ENCODE measurements at regions of chr6 and their contacts with region 1.

Region 1: GRCh38 chr6:100322886-100323285 is 141.8 kb downstream of the SIM1 start:
- DNase-seq: no peak
- ATAC-seq: no peak
- H3K4me3 ChIP-seq: no peak overlapping the region
- H3K27ac ChIP-seq: no peak overlapping the region
- H3K4me1 ChIP-seq: no peaks in the 10 kb centered on the region
- H3K27me3 ChIP-seq: no peaks in the 10 kb centered on the region
- CTCF ChIP-seq: no peak
- EP300 ChIP-seq: no peak
- POLR2A ChIP-seq: no peak
- RAD21 ChIP-seq: no peak

Region 2: DNA sequence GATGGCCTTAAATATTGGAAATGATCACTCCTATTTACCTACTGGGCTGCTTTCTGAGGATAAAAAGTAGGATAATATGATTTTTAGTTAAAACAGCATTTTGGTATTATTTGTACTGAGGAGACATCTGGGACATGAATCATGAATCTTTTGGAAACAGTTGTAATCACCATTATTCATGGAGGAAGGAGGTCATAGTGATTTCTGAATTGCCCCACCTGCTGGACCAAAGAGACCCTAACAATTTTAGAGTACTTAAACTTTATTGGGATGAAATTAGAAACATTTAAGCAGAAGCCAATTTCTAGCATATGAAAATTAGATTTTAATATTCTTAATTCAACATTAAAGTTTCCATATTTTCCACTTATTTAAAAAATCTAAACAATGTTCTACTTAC is 250.3 kb after region 1 on chr6:
- CTCF ChIA-PET with region 1: no interaction called
- POLR2A ChIA-PET with region 1: no interaction called
- in situ Hi-C with region 1: no loop called
- intact Hi-C with region 1: loop called (anchors 10 kb)
- DNase-seq: peak; percentile 15
- ATAC-seq: no peak
- H3K4me3 ChIP-seq: no peak overlapping the region
- H3K27ac ChIP-seq: no peak overlapping the region
- H3K4me1 ChIP-seq: no peaks in the 10 kb centered on the region
- H3K27me3 ChIP-seq: no peaks in the 10 kb centered on the region
- CTCF ChIP-seq: no peak
- EP300 ChIP-seq: no peak
- POLR2A ChIP-seq: no peak
- RAD21 ChIP-seq: no peak

Region 3: DNA sequence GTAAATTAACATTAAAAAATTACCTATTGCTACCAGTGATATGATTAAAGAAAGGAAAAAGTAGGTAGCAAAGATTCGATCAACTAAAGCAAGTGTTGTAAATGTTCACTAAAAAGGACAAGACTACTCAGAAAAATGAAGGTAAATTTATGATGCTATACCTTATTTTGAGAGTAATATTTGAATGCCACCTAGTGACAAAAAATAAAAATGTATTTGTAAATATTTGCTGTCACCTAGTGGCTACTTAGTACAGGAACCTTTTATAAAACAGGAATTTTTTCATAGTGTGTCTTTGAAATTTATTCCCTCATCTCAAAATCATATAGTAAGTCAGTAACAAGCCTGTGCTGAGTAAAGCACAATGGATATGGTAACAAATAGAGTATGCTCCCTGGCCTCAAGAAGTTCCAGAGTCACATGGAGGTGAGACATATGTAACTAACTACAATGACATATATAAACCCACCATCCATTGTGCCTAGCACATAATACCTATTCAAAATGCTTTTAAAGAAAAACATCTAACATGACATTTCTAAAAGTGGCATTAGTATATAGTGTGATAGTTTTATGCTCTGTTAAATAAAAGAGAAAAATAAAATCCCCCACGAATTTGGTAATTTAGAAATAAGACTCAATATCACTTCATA is 334.9 kb after region 1 on chr6:
- CTCF ChIA-PET with region 1: no interaction called
- POLR2A ChIA-PET with region 1: no interaction called
- in situ Hi-C with region 1: no loop called
- intact Hi-C with region 1: loop called (anchors 5 kb)
- DNase-seq: no peak
- ATAC-seq: 0 out of 3 replicates have a peak, but pooled peaks have one; percentile 41
- H3K4me3 ChIP-seq: no peak overlapping the region
- H3K27ac ChIP-seq: no peak overlapping the region
- H3K4me1 ChIP-seq: no peaks in the 10 kb centered on the region
- H3K27me3 ChIP-seq: no peaks in the 10 kb centered on the region
- CTCF ChIP-seq: peak; percentile 31; the same call in 1 of the 2 replicates
- EP300 ChIP-seq: no peak
- POLR2A ChIP-seq: no peak
- RAD21 ChIP-seq: no peak